CD8-positive, alpha-beta T cell (primary cell): ENCODE measurements at regions of chr12 and their contacts with region 1.

Region 1: GRCh38 chr12:54984658-54985376 is at the start of gene TESPA1:
- DNase-seq: peak; percentile 64 to 94 (median 87)
- ATAC-seq: peak; percentile 87
- H3K4me3 ChIP-seq: peak within 1 kb of the TSS; percentile 52 to 59
- H3K4me3 Mint-ChIP-seq: peak within 1 kb of the TSS; percentile 89
- H3K27ac ChIP-seq: peak within 1 kb of the TSS; percentile 87 to 88
- H3K27ac Mint-ChIP-seq: peak within 1 kb of the TSS; percentile 98
- H3K4me1 ChIP-seq: peaks cover 61% of the 10 kb centered on the region
- H3K4me1 Mint-ChIP-seq: peaks cover 93% of the 10 kb centered on the region
- H3K27me3 ChIP-seq: no peaks in the 10 kb centered on the region
- H3K27me3 Mint-ChIP-seq: no peaks in the 10 kb centered on the region
- CTCF ChIP-seq: no peak
- total RNA-seq, gene TESPA1: 70.9 to 84.8 TPM

Region 2: DNA sequence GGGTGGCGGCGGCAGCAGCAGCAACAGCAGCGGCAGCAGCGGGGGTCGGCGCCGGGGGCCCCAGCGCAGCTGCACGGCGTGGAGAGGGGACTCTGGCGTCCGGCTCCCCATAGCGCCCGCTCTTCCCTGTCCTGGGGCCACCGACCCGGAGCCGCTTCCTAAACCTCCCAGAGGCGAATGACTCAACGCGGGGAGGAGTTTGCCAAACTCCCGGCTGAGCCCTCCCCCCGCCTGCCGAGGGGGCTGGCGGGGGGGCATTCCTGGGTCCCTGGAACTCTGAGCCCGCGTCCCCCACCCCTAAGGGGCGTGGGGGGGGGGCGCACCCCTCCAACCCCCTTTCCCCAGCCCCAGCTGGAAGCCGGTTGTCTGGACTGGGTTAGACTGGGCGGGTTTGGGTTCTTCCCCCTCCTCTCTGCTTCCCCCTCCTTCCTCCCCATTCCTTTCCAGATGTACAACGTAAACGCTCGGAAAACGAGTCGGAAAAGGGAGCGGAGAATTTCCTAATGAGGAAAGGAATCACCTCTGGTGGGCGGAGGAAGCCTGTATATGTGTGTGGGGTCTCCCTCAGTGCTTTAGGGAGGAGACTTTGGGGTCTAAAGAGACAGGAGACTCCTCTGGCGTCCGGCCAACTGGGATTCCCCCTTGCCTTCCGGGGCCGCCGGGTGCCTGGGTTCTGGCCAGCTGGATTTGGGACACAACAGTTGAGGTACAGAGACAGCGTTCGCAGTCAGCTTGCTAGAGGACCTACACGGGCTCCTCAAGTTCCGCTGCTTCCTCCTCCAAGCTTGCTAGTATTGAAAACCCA is 565.5 kb before region 1 on chr12 and contains the start of gene ITGA5:
- CTCF ChIA-PET with region 1: no interaction called
- POLR2A ChIA-PET with region 1: interaction called, 3 read pairs
- intact Hi-C with region 1: loop called in 1 of 2 experiments (anchors 10 kb)
- DNase-seq: peak in 5 of 9 experiments; percentile 27 to 76 (median 63)
- ATAC-seq: peak; percentile 33
- H3K4me3 ChIP-seq: peak within 1 kb of the TSS; percentile 92
- H3K4me3 Mint-ChIP-seq: peak within 1 kb of the TSS; percentile 94
- H3K27ac ChIP-seq: peak within 1 kb of the TSS; percentile 71 to 84
- H3K27ac Mint-ChIP-seq: peak within 1 kb of the TSS; percentile 97
- H3K4me1 ChIP-seq: peaks cover 52% of the 10 kb centered on the region
- H3K4me1 Mint-ChIP-seq: peaks cover 53% of the 10 kb centered on the region
- H3K27me3 ChIP-seq: no peaks in the 10 kb centered on the region
- H3K27me3 Mint-ChIP-seq: no peaks in the 10 kb centered on the region
- CTCF ChIP-seq: no peak
- total RNA-seq, gene ITGA5: 115 to 125 TPM

Region 3: GRCh38 chr12:54891717-54892554 is 92.9 kb before region 1 on chr12:
- CTCF ChIA-PET with region 1: no interaction called
- POLR2A ChIA-PET with region 1: no interaction called
- intact Hi-C with region 1: no loop called
- DNase-seq: no peak
- ATAC-seq: no peak
- H3K4me3 ChIP-seq: no peak overlapping the region
- H3K4me3 Mint-ChIP-seq: no peak overlapping the region
- H3K27ac ChIP-seq: no peak overlapping the region
- H3K27ac Mint-ChIP-seq: no peak overlapping the region
- H3K4me1 ChIP-seq: no peaks in the 10 kb centered on the region
- H3K4me1 Mint-ChIP-seq: no peaks in the 10 kb centered on the region
- H3K27me3 ChIP-seq: no peaks in the 10 kb centered on the region
- H3K27me3 Mint-ChIP-seq: peaks cover 2% of the 10 kb centered on the region
- CTCF ChIP-seq: no peak

Region 4: GRCh38 chr12:54941659-54942058 is 43.2 kb before region 1 on chr12:
- CTCF ChIA-PET with region 1: no interaction called
- POLR2A ChIA-PET with region 1: no interaction called
- intact Hi-C with region 1: no loop called
- DNase-seq: no peak
- ATAC-seq: no peak
- H3K4me3 ChIP-seq: no peak overlapping the region
- H3K4me3 Mint-ChIP-seq: no peak overlapping the region
- H3K27ac ChIP-seq: no peak overlapping the region
- H3K27ac Mint-ChIP-seq: no peak overlapping the region
- H3K4me1 ChIP-seq: no peaks in the 10 kb centered on the region
- H3K4me1 Mint-ChIP-seq: peaks cover 4% of the 10 kb centered on the region
- H3K27me3 ChIP-seq: no peaks in the 10 kb centered on the region
- H3K27me3 Mint-ChIP-seq: no peaks in the 10 kb centered on the region
- CTCF ChIP-seq: no peak

Region 5: GRCh38 chr12:54967461-54967860 is 17.4 kb before region 1 on chr12:
- CTCF ChIA-PET with region 1: interaction called, 14 read pairs
- POLR2A ChIA-PET with region 1: interaction called, 44 read pairs
- intact Hi-C with region 1: loop called (anchors 1 to 2 kb)
- DNase-seq: peak in 5 of 9 experiments; percentile 40 to 65 (median 50)
- ATAC-seq: peak; percentile 61
- H3K4me3 ChIP-seq: peak overlapping the region in 1 of 2 experiments; percentile 6
- H3K4me3 Mint-ChIP-seq: peak overlapping the region; percentile 70
- H3K27ac ChIP-seq: peak overlapping the region in 1 of 2 experiments; percentile 34
- H3K27ac Mint-ChIP-seq: peak overlapping the region; percentile 91
- H3K4me1 ChIP-seq: peaks cover 57% of the 10 kb centered on the region
- H3K4me1 Mint-ChIP-seq: peaks cover 80% of the 10 kb centered on the region
- H3K27me3 ChIP-seq: no peaks in the 10 kb centered on the region
- H3K27me3 Mint-ChIP-seq: no peaks in the 10 kb centered on the region
- CTCF ChIP-seq: no peak